AG04450 (cell line): ENCODE measurements at regions of chr17 and their contacts with region 1.

Region 1: GRCh38 chr17:38351412-38352222 is at the start of gene SOCS7:
- DNase-seq: peak; percentile 55
- H3K4me3 ChIP-seq: peak within 1 kb of the TSS; percentile 71
- H3K27ac ChIP-seq: peak within 1 kb of the TSS; percentile 89
- H3K27me3 ChIP-seq: no peaks in the 10 kb centered on the region
- CTCF ChIP-seq: no peak
- polyA plus RNA-seq, gene SOCS7: 5.8 and 6.5 TPM in 2 replicates

Region 2: GRCh38 chr17:38322091-38322779 is 29.4 kb before region 1 on chr17:
- CTCF ChIA-PET with region 1: interaction called, 15 read pairs
- POLR2A ChIA-PET with region 1: no interaction called
- DNase-seq: no peak
- H3K4me3 ChIP-seq: no peak overlapping the region
- H3K27ac ChIP-seq: no peak overlapping the region
- H3K27me3 ChIP-seq: peaks cover 3% of the 10 kb centered on the region
- CTCF ChIP-seq: peak; percentile 63

Region 3: GRCh38 chr17:38341035-38341721 is 10.4 kb before region 1 on chr17:
- CTCF ChIA-PET with region 1: interaction called, 24 read pairs
- POLR2A ChIA-PET with region 1: no interaction called
- DNase-seq: no peak
- H3K4me3 ChIP-seq: no peak overlapping the region
- H3K27ac ChIP-seq: no peak overlapping the region
- H3K27me3 ChIP-seq: peaks cover 44% of the 10 kb centered on the region
- CTCF ChIP-seq: no peak

Region 4: DNA sequence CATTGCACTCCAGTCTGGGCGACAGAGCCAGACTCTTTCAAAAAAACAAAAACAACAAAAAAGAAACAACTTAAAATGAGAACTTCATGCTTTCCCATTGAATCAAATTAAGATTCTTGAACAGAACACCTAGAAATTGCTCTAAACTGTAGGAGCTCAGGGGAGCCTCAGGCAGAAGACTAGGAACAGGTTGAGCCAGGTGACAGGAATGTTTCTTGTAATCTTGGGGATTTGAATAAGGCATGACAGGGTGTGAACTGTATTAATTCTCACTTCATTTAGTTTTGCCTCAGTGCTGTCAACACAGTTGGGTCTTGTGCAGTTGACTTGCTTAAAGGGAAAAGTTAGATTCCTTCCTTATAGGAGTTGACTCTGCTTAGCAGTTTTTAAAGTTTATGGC is 27.8 kb after region 1 on chr17:
- CTCF ChIA-PET with region 1: interaction called, 18 read pairs
- POLR2A ChIA-PET with region 1: no interaction called
- DNase-seq: no peak
- H3K4me3 ChIP-seq: no peak overlapping the region
- H3K27ac ChIP-seq: no peak overlapping the region
- H3K27me3 ChIP-seq: no peaks in the 10 kb centered on the region
- CTCF ChIP-seq: no peak

Region 5: DNA sequence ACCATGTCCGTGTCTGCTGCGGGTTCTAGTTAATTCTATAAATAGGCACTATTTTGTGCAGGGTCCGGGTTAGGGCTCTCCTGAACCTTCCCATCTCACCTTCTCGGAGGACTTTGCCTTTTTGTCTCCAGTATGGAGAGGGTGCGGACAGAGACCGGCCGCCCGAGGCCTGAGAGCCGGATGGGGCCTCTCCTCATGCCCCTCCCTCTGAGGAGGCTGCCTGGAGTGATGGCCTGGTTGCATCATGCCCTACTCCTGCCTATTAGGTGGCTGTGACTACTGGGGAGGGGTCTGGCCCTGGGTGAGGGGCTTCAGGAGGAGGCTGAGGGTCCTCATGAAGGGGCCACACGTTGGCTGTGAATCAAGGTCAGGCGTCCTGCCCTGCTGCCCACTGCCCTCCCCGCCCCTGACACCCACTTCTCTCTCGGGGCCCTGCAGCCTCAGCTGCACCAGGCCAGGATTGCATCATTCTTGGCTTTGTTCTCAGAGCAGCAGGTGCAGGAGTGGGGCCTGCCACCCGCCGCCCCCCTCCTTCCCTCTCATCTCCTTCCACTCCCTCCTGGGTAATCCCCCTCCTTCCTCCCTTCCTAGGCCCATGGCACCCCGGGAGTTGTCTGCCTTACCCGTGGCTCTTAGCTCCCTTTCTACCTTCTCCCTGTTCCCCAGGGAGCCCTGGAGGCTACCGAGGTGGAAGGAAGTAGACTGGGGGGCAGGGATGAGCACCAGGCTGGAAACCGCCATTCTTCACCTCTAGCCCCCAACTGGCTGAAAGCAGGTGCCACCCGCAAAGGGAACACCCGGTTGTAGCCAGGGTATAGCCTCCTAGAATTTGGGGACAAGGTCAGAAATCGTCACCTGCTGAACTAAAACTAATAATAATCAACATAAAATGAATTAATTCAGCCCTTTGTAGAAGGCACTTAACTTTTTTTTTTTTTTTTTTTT is 63.9 kb after region 1 on chr17:
- CTCF ChIA-PET with region 1: interaction called, 179 read pairs
- POLR2A ChIA-PET with region 1: interaction called, 12 read pairs
- DNase-seq: peak; percentile 26
- H3K4me3 ChIP-seq: peak overlapping the region; percentile 38
- H3K27ac ChIP-seq: peak overlapping the region; percentile 57
- H3K27me3 ChIP-seq: peaks cover 28% of the 10 kb centered on the region
- CTCF ChIP-seq: no peak

Region 6: DNA sequence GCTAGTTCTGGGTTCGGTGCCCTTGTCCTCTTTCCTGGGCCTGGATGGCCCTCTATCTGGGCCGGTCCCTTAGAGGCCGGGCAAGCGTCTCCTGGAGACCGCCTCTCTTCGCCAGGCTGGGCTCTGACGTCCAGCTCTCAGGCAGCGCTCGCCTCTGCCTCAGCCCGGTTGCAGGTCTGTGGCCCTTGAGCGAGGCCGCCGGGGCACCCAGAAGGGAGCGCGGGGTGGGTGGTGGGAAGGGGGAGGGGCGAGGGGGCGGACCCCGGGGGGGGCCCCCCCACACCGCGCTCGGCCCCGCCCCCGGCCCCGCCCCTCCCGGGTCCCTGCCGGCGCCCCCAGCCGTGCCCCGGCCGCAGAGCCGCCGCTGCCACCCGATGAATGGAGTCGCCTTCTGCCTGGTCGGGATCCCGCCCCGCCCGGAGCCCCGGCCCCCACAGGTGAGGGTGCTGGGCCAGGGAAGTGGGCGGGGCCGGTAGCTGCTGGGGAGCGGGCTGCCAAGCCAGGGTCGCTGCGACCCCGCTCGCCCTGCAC is 76.6 kb after region 1 on chr17 and contains the start of gene ARHGAP23:
- CTCF ChIA-PET with region 1: interaction called, 11 read pairs
- POLR2A ChIA-PET with region 1: no interaction called
- DNase-seq: peak; percentile 47
- H3K4me3 ChIP-seq: peak within 1 kb of the TSS; percentile 76
- H3K27ac ChIP-seq: peak within 1 kb of the TSS; percentile 77
- H3K27me3 ChIP-seq: no peaks in the 10 kb centered on the region
- CTCF ChIP-seq: no peak
- polyA plus RNA-seq, gene ARHGAP23: 14.1 and 19.3 TPM in 2 replicates

Region 7: DNA sequence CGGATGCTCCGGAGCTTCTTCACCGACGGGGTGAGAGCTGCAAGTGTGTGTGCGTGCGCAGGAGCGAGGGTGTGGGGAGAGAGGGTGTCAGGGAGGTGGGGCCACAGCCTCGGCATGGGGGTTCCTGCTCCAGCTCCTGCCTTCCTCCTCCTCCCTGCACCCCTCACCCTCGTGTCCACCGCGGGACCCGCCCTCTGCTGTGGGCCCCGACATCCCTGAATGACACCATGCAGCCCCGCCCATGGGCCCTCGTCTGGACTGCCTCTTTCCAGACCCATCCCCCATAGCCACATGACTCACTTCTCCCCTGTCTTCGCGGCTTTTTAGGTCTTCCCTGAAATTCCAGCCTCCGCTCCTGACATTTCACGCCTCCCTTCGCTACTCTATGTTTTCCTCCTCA is 118.3 kb after region 1 on chr17:
- CTCF ChIA-PET with region 1: no interaction called
- POLR2A ChIA-PET with region 1: no interaction called
- DNase-seq: no peak
- H3K4me3 ChIP-seq: no peak overlapping the region
- H3K27ac ChIP-seq: no peak overlapping the region
- H3K27me3 ChIP-seq: no peaks in the 10 kb centered on the region
- CTCF ChIP-seq: no peak

Region 8: DNA sequence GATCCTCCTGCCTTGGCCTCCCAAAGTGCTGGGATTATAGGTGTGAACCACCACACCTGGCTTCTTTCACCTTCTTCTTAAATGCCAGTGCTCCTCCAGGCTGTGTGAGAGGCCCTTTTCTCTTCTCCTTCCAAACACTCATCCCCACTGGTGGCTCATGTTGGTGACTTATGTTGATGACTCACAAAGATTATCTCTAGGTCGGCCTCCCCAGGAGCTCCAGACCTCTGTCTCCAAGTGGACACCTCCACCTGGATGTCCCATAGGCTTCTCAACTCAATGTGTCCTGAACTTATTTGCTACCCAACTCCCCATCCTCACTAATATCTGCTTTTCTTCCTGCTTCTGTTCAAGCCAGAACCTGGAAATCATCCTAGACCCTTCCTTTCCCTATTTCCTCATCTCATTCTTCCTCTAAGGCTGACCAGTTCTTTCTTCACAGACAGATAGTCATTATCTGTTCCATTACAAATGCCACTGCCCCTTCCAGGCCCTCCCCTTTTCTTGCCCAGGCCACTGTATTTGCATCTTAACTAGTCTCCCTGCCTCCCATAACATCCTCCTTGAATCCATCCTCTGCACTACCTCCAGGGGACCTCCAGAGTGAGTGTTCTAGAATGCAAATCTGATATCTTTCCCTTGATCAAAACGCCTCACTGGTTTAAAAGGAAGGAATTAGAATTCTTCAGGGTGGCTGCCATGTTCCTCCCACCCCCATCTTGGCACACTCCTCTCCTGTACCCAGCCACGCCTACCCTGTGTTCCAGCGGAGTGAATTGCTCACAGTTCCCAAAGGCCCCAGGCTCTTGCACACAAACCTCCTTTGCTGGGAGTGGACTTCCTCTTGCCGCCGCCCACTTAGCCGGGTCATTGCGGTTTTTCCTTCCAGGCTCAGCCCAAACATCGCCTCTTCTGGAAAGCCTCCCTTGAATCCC is 650.4 kb after region 1 on chr17:
- CTCF ChIA-PET with region 1: no interaction called
- POLR2A ChIA-PET with region 1: no interaction called
- DNase-seq: no peak
- H3K4me3 ChIP-seq: no peak overlapping the region
- H3K27ac ChIP-seq: no peak overlapping the region
- H3K27me3 ChIP-seq: peaks cover 10% of the 10 kb centered on the region
- CTCF ChIP-seq: no peak